AG04450 (cell line): ENCODE measurements at regions of chr15 and their contacts with region 1.

Region 1: GRCh38 chr15:81312790-81313543 is 11.0 kb downstream of the STARD5 start:
- DNase-seq: peak; percentile 95
- H3K4me3 ChIP-seq: no peak overlapping the region
- H3K27ac ChIP-seq: peak overlapping the region; percentile 89
- H3K27me3 ChIP-seq: no peaks in the 10 kb centered on the region
- CTCF ChIP-seq: no peak

Region 2: DNA sequence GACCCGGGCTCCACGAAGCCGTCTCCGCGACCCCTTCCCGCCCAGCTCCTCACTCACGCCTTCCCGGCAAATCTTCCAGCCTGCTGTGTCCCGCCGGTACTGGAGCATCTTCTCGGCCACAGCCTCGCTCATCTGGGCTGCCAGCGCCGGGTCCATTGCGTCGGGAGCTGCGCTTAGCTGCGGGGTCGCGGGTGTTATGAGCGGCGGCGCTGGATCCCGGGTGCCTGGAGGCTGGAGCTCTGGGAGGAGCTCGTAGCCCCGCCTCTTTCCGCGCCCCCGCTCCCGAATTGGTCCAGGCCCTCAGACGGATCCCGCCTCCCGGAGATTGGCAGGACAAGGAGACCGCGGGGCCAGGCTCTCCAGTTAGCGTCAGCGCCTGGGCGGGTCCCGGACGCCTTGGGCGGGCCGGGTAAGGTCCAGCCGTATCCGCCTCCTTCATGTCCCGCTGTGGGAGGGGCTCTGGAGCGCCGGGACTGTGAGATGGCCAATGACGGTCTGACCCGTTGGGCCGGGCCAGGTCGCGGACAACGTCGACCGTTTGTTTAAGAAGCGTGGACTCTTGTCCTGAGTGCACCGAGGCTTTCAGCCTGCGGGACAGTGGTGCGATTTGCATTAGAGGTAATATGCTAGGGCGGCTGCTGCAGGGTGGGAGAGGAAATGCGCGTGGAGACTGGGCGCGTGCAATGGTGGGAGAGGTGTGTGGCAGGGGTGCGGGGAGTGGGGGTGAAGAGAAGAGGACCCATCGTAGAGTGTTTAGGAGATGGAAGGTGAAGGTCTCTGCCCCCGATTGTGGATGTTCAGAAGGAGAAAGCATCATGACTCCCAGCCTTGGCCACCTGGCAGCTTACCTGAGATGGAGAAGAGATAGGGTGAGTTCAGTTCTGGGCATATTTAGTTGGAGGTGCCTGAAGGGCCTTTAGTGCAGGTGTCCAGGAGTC is 11.2 kb after region 1 on chr15 and contains the start of gene STARD5:
- CTCF ChIA-PET with region 1: no interaction called
- POLR2A ChIA-PET with region 1: interaction called, 23 read pairs
- DNase-seq: peak; percentile 88
- H3K4me3 ChIP-seq: peak within 1 kb of the TSS; percentile 95
- H3K27ac ChIP-seq: peak within 1 kb of the TSS; percentile 34
- H3K27me3 ChIP-seq: no peaks in the 10 kb centered on the region
- CTCF ChIP-seq: no peak
- polyA plus RNA-seq, gene STARD5: 19.0 and 20.5 TPM in 2 replicates

Region 3: DNA sequence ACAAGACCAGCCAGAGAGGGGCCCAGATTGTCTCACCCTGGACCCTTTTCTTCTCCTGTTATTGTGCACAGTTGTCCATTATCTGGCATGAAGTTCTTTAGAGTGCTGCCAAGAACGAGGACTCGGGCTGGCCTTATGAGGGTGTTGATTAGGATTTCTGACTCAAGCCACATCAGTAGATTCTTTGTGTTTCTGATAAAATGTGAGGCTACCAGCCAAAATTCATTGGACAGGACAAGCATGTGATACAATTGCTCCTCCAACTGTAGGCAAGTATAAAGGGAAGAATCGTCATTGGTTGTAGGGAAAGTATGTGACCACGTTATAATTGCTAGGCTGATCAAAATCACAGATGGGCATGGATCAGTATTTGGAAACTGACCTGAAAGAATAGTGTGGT is 160.2 kb after region 1 on chr15:
- CTCF ChIA-PET with region 1: no interaction called
- POLR2A ChIA-PET with region 1: no interaction called
- DNase-seq: no peak
- H3K4me3 ChIP-seq: no peak overlapping the region
- H3K27ac ChIP-seq: no peak overlapping the region
- H3K27me3 ChIP-seq: peaks cover 2% of the 10 kb centered on the region
- CTCF ChIP-seq: no peak

Region 4: GRCh38 chr15:81752546-81752942 is 439.6 kb after region 1 on chr15:
- CTCF ChIA-PET with region 1: no interaction called
- POLR2A ChIA-PET with region 1: interaction called, 10 read pairs
- DNase-seq: no peak
- H3K4me3 ChIP-seq: no peak overlapping the region
- H3K27ac ChIP-seq: no peak overlapping the region
- H3K27me3 ChIP-seq: peaks cover 2% of the 10 kb centered on the region
- CTCF ChIP-seq: no peak